ENCODE measurements at regions of chr20 and their contacts with region 1.

Region 1: DNA sequence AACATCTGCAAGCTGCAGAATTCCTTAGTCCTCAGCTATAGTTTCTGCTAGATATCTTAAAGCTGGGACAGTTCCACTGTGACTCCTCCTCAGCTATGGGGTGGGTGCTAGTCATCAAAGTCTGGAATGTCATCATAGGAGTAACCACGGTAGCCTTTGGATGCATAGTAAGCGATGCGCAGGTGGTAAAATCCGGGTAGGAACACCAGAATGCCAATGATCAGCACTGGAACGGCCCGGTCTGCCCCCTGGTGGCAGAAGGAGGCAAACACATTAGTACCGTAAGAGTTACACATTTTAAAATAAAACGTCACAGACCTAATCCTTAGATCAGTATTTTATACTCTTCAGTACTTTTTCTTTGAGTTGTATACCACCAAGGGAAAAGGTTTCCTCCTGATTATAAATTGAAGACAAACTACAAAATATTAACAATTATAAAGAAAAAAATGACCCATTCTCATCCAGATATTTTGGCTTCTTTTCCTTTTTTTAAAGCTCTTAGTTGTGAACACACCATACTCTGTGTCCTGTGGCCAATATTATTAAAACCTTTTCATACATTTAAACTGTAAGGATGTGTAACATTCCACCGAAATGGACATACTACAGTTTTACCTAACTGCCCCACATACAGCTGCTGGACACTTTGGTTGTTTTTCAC is 18.9 kb downstream of the PCNA start:
- DNase-seq: peak; percentile 51 to 77 (median 67)
- ATAC-seq: peak; percentile 97
- H3K4me3 ChIP-seq: no peak overlapping the region
- H3K4me3 Mint-ChIP-seq: no peak overlapping the region
- H3K27ac ChIP-seq: peak overlapping the region; percentile 43
- H3K27ac Mint-ChIP-seq: peak overlapping the region; percentile 44 to 78 (median 69)
- H3K4me1 ChIP-seq: peaks cover 3 to 9% of the 10 kb centered on the region in 2 donors
- H3K4me1 Mint-ChIP-seq: peaks cover 5 to 20% (median 12%) of the 10 kb centered on the region in 7 donors
- H3K27me3 ChIP-seq: no peaks in the 10 kb centered on the region
- H3K27me3 Mint-ChIP-seq: no peaks in the 10 kb centered on the region

Region 2: GRCh38 chr20:4607287-4607713 is 493.5 kb before region 1 on chr20:
- CTCF ChIA-PET with region 1: no interaction called
- POLR2A ChIA-PET with region 1: no interaction called
- intact Hi-C with region 1: loop called (anchors 1 to 5 kb)
- DNase-seq: peak in 8 of 9 donors; percentile 43 to 75 (median 68)
- ATAC-seq: peak; percentile 93
- H3K4me3 ChIP-seq: no peak overlapping the region
- H3K4me3 Mint-ChIP-seq: no peak overlapping the region
- H3K27ac ChIP-seq: no peak overlapping the region
- H3K27ac Mint-ChIP-seq: no peak overlapping the region
- H3K4me1 ChIP-seq: no peaks in the 10 kb centered on the region
- H3K4me1 Mint-ChIP-seq: peaks cover 0 to 8% (median 0%) of the 10 kb centered on the region in 7 donors
- H3K27me3 ChIP-seq: no peaks in the 10 kb centered on the region
- H3K27me3 Mint-ChIP-seq: peaks cover 17 to 31% (median 20%) of the 10 kb centered on the region in 5 donors

Region 3: DNA sequence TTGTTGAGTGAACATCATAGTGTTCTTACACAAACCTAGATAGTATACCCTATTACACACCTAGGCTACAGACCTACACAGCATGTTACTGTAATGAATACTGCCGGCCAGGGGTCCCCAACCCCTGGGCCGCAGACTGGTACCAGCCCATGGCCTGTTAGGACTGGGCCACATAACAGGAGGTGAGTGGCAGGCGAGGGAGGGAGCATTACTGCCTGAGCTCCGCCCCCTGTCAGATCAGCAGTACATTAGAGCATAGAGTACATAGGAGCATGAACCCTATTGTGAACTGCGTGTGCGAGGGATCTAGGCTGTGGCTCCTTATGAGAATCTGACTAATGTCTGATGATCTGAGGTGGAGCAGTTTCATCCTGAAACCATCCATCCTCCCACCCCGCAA is 252.8 kb before region 1 on chr20:
- CTCF ChIA-PET with region 1: no interaction called
- POLR2A ChIA-PET with region 1: no interaction called
- intact Hi-C with region 1: no loop called
- DNase-seq: no peak
- ATAC-seq: no peak
- H3K4me3 ChIP-seq: no peak overlapping the region
- H3K4me3 Mint-ChIP-seq: no peak overlapping the region
- H3K27ac ChIP-seq: no peak overlapping the region
- H3K27ac Mint-ChIP-seq: no peak overlapping the region
- H3K4me1 ChIP-seq: no peaks in the 10 kb centered on the region
- H3K4me1 Mint-ChIP-seq: peaks cover 0 to 9% (median 8%) of the 10 kb centered on the region in 7 donors
- H3K27me3 ChIP-seq: no peaks in the 10 kb centered on the region
- H3K27me3 Mint-ChIP-seq: peaks cover 0 to 1% (median 0%) of the 10 kb centered on the region in 5 donors

Region 4: DNA sequence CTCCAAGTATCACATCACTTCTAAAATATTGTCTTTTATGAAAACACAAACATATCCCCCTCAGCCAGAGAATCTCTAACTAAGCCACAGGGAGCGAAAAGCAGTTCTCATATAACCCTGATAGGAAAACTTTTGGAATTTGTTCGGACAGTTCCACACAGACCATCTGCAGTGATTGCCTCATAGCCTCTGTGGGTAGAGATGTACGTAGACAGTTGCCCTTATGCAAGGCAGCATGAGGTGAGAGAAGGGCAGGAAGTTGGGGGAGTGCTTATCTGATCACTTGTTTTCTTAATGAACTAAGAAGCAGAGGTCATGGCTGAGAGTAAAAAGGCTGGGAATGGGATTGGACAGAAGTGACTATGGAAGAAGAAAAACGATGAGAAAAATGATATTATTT is 139.1 kb before region 1 on chr20:
- CTCF ChIA-PET with region 1: interaction called, 30 read pairs
- POLR2A ChIA-PET with region 1: interaction called, 10 read pairs
- intact Hi-C with region 1: loop called (anchors 1 to 5 kb)
- DNase-seq: peak in 7 of 9 donors; percentile 21 to 48 (median 30)
- ATAC-seq: peak; percentile 89
- H3K4me3 ChIP-seq: no peak overlapping the region
- H3K4me3 Mint-ChIP-seq: peak overlapping the region in 9 of 10 donors; percentile 30 to 83 (median 61)
- H3K27ac ChIP-seq: peak overlapping the region; percentile 47
- H3K27ac Mint-ChIP-seq: peak overlapping the region; percentile 87 to 97 (median 90)
- H3K4me1 ChIP-seq: peaks cover 15 to 16% of the 10 kb centered on the region in 2 donors
- H3K4me1 Mint-ChIP-seq: peaks cover 13 to 29% (median 24%) of the 10 kb centered on the region in 7 donors
- H3K27me3 ChIP-seq: no peaks in the 10 kb centered on the region
- H3K27me3 Mint-ChIP-seq: no peaks in the 10 kb centered on the region

Region 5: DNA sequence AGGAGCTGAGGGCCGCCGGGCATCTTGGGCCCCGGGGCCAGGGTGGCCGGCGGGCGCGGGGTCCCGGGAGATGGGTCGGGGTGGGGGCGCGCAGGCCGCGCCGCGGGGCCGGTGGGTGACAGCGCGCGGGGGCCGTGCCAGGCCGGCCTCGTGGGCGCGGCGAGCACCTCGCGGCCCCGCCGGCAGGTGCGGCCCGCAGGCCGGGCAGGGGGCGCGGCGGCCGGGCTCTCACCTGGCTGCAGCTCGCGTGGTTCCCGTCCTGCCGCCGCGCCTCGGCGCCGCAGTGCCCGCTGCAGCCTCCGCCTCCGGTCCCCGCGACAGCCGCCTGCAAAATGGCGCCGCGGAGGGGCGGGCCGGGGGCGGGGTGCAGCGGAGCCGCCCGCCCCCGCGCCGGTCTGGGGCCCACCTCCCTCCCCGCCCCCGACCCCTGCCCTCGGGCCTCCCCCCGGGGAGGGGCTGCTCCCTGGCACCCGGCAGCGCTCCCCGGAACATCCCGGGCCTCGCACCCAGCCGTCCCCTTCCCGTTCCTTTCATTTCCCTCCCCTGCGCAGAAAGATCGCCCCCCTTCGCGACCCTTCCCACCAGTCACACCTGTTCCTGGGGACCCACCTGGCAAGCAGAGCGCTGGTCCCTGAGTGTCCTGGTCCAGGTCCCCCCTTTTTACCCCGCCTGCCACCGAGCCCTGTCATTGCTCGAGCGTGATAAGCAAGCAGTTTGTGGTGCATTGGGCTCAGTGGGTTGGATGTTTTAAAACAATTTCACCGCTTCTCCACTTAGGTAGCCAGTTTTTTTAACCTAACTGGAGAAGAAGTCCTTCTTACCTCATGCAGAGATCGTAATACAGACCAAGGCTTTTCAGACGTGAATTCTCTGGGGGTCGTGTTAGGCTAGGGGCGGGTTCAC is 99.4 kb before region 1 on chr20 and contains the start of gene SLC23A2:
- CTCF ChIA-PET with region 1: interaction called, 7 read pairs
- POLR2A ChIA-PET with region 1: no interaction called
- intact Hi-C with region 1: loop called (anchors 2 to 5 kb)
- DNase-seq: peak; percentile 39 to 72 (median 55)
- ATAC-seq: peak; percentile 93
- H3K4me3 ChIP-seq: peak within 1 kb of the TSS; percentile 93
- H3K4me3 Mint-ChIP-seq: peak within 1 kb of the TSS; percentile 89 to 99 (median 92)
- H3K27ac ChIP-seq: peak within 1 kb of the TSS; percentile 75
- H3K27ac Mint-ChIP-seq: peak within 1 kb of the TSS; percentile 84 to 97 (median 87)
- H3K4me1 ChIP-seq: peaks cover 14 to 17% of the 10 kb centered on the region in 2 donors
- H3K4me1 Mint-ChIP-seq: peaks cover 33 to 48% (median 36%) of the 10 kb centered on the region in 7 donors
- H3K27me3 ChIP-seq: no peaks in the 10 kb centered on the region
- H3K27me3 Mint-ChIP-seq: peaks cover 0 to 15% (median 0%) of the 10 kb centered on the region in 5 donors
- total RNA-seq, gene SLC23A2: 19.2 to 32.4 (median 29.6) TPM

Region 6: GRCh38 chr20:5078399-5078958 is 22.3 kb before region 1 on chr20:
- CTCF ChIA-PET with region 1: interaction called, 5 read pairs
- POLR2A ChIA-PET with region 1: interaction called, 4 read pairs
- intact Hi-C with region 1: loop called (anchors 1 kb)
- DNase-seq: peak; percentile 39 to 78 (median 74)
- ATAC-seq: peak; percentile 95
- H3K4me3 ChIP-seq: peak overlapping the region; percentile 33
- H3K4me3 Mint-ChIP-seq: peak overlapping the region; percentile 61 to 92 (median 89)
- H3K27ac ChIP-seq: peak overlapping the region; percentile 79
- H3K27ac Mint-ChIP-seq: peak overlapping the region; percentile 97 to 100 (median 99)
- H3K4me1 ChIP-seq: peaks cover 16 to 25% of the 10 kb centered on the region in 2 donors
- H3K4me1 Mint-ChIP-seq: peaks cover 24 to 54% (median 32%) of the 10 kb centered on the region in 7 donors
- H3K27me3 ChIP-seq: no peaks in the 10 kb centered on the region
- H3K27me3 Mint-ChIP-seq: no peaks in the 10 kb centered on the region

Measured in naive thymus-derived CD4-positive, alpha-beta T cell (primary cell).